Naive thymus-derived CD4-positive, alpha-beta T cell (primary cell): ENCODE measurements at regions of chr3 and their contacts with region 1.

Region 1: DNA sequence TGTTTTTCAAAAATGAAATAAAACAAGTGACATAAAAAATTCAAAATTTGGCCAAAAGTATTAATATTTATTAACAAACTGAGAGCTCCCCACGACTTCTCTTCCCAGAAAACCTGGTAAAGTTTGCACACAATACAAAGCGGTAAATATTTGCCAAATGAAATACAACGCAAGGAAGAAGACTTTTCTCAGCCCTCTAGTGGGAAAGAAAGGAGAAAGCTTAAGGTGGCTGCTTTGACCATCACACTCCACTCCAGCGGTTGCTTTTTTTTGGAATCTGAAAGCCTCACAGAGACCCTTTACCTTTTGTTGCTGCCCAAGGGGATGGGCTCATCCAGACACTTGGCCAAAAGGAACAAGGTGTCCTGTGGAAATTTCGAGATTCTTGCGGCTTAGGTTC is 1.1 kb upstream of the GK5 start:
- DNase-seq: no peak
- ATAC-seq: no peak
- H3K4me3 ChIP-seq: no peak overlapping the region
- H3K4me3 Mint-ChIP-seq: peak overlapping the region; percentile 62 to 94 (median 82)
- H3K27ac ChIP-seq: no peak overlapping the region
- H3K27ac Mint-ChIP-seq: peak overlapping the region in 3 of 9 donors; percentile 18 to 45 (median 33)
- H3K4me1 ChIP-seq: no peaks in the 10 kb centered on the region
- H3K4me1 Mint-ChIP-seq: peaks cover 0 to 21% (median 16%) of the 10 kb centered on the region in 7 donors
- H3K27me3 ChIP-seq: no peaks in the 10 kb centered on the region
- H3K27me3 Mint-ChIP-seq: no peaks in the 10 kb centered on the region

Region 2: GRCh38 chr3:142028243-142028777 is 198.2 kb before region 1 on chr3:
- CTCF ChIA-PET with region 1: no interaction called
- POLR2A ChIA-PET with region 1: no interaction called
- intact Hi-C with region 1: loop called (anchors 5 kb)
- DNase-seq: peak in 7 of 9 donors; percentile 45 to 72 (median 63)
- ATAC-seq: peak; percentile 90
- H3K4me3 ChIP-seq: peak overlapping the region; percentile 47
- H3K4me3 Mint-ChIP-seq: peak overlapping the region; percentile 81 to 97 (median 90)
- H3K27ac ChIP-seq: peak overlapping the region; percentile 57
- H3K27ac Mint-ChIP-seq: peak overlapping the region; percentile 49 to 92 (median 82)
- H3K4me1 ChIP-seq: no peaks in the 10 kb centered on the region
- H3K4me1 Mint-ChIP-seq: peaks cover 13 to 50% (median 49%) of the 10 kb centered on the region in 7 donors
- H3K27me3 ChIP-seq: no peaks in the 10 kb centered on the region
- H3K27me3 Mint-ChIP-seq: no peaks in the 10 kb centered on the region

Region 3: GRCh38 chr3:142148792-142149672 is 77.5 kb before region 1 on chr3 and contains the start of gene TFDP2:
- CTCF ChIA-PET with region 1: no interaction called
- POLR2A ChIA-PET with region 1: no interaction called
- intact Hi-C with region 1: loop called (anchors 1 kb)
- DNase-seq: peak; percentile 77 to 88 (median 86)
- ATAC-seq: peak; percentile 99
- H3K4me3 ChIP-seq: peak within 1 kb of the TSS; percentile 81
- H3K4me3 Mint-ChIP-seq: peak within 1 kb of the TSS; percentile 85 to 96 (median 92)
- H3K27ac ChIP-seq: peak within 1 kb of the TSS; percentile 78
- H3K27ac Mint-ChIP-seq: peak within 1 kb of the TSS; percentile 57 to 95 (median 87)
- H3K4me1 ChIP-seq: peaks cover 0 to 13% of the 10 kb centered on the region in 2 donors
- H3K4me1 Mint-ChIP-seq: peaks cover 24 to 41% (median 32%) of the 10 kb centered on the region in 7 donors
- H3K27me3 ChIP-seq: no peaks in the 10 kb centered on the region
- H3K27me3 Mint-ChIP-seq: peaks cover 0 to 16% (median 0%) of the 10 kb centered on the region in 5 donors
- total RNA-seq, gene TFDP2: 23.7 to 44.7 (median 41.0) TPM

Region 4: GRCh38 chr3:142270407-142270806 is 43.9 kb after region 1 on chr3:
- CTCF ChIA-PET with region 1: no interaction called
- POLR2A ChIA-PET with region 1: no interaction called
- intact Hi-C with region 1: loop called in 1 of 2 experiments (anchors 2 kb)
- DNase-seq: peak in 2 of 9 donors; percentile 2 to 23
- ATAC-seq: peak; percentile 91
- H3K4me3 ChIP-seq: no peak overlapping the region
- H3K4me3 Mint-ChIP-seq: peak overlapping the region in 1 of 10 donors; percentile 47
- H3K27ac ChIP-seq: no peak overlapping the region
- H3K27ac Mint-ChIP-seq: peak overlapping the region in 2 of 9 donors; percentile 18 to 83
- H3K4me1 ChIP-seq: peaks cover 0 to 30% of the 10 kb centered on the region in 2 donors
- H3K4me1 Mint-ChIP-seq: peaks cover 0 to 30% (median 9%) of the 10 kb centered on the region in 7 donors
- H3K27me3 ChIP-seq: no peaks in the 10 kb centered on the region
- H3K27me3 Mint-ChIP-seq: no peaks in the 10 kb centered on the region

Region 5: GRCh38 chr3:142447852-142448823 is 221.7 kb after region 1 on chr3 and contains the start of gene XRN1:
- CTCF ChIA-PET with region 1: no interaction called
- POLR2A ChIA-PET with region 1: no interaction called
- intact Hi-C with region 1: loop called (anchors 1 to 10 kb)
- DNase-seq: peak; percentile 90 to 97 (median 94)
- ATAC-seq: peak; percentile 99
- H3K4me3 ChIP-seq: peak within 1 kb of the TSS; percentile 78
- H3K4me3 Mint-ChIP-seq: peak within 1 kb of the TSS; percentile 89 to 100 (median 98)
- H3K27ac ChIP-seq: peak within 1 kb of the TSS; percentile 99
- H3K27ac Mint-ChIP-seq: peak within 1 kb of the TSS; percentile 98 to 100 (median 99)
- H3K4me1 ChIP-seq: peaks cover 31% of the 10 kb centered on the region in 2 donors
- H3K4me1 Mint-ChIP-seq: peaks cover 26 to 55% (median 51%) of the 10 kb centered on the region in 7 donors
- H3K27me3 ChIP-seq: no peaks in the 10 kb centered on the region
- H3K27me3 Mint-ChIP-seq: no peaks in the 10 kb centered on the region
- total RNA-seq, gene XRN1: 86.1 to 123 (median 103) TPM